Posterior vena cava (tissue), 2 donors: ENCODE measurements at regions of chr7 and their contacts with region 1.

Region 1: DNA sequence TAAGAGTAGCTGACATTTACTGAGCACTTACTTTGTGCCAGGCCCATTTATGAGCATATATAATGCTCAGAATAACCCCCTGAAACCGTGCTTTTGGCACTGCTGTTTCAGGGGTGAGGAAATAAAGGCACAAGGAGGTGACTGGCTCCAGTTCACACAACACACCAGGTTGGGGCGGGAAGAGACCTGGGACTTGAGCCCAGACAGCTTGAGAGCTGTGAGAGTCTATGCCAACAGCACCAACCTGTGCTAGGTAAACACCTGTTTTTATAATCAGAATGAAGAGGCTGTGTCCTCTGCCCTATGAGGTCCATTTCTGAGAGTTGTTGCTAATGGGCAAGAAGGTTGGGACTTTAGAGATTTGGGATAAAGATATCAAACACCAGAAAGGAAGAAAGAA is 8.8 kb upstream of the AZGP1 start:
- DNase-seq: no peak

Region 2: DNA sequence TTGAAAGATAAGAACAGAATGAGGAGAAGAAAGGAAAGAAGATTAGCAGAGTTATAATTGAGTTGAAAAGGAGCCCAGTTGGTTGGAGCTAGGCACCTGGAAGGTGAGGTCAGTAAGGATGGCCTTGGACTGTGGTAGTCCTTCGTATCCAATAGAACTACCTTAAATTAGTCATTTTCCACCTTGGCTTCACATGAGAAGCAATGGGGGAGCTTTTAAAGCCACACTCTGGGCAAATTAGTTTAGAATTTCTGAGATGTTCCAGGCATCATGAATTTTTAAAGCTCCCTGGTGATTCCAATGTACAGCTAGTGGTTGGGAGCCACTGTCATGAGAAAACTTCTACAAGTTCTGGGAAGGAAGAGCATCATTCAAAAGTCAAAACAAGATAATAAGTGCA is 277.5 kb before region 1 on chr7:
- intact Hi-C with region 1: no loop called
- DNase-seq: no peak

Region 3: GRCh38 chr7:99918959-99919813 is 65.4 kb before region 1 on chr7 and contains the start of gene TRIM4:
- intact Hi-C with region 1: loop called in 1 of 2 experiments (anchors 10 kb)
- DNase-seq: peak; percentile 98
- total RNA-seq, gene TRIM4: 14.7 to 22.9 TPM